Heart left ventricle (tissue), 16 donors: ENCODE measurements at regions of chr10 and their contacts with region 1.

Region 1: DNA sequence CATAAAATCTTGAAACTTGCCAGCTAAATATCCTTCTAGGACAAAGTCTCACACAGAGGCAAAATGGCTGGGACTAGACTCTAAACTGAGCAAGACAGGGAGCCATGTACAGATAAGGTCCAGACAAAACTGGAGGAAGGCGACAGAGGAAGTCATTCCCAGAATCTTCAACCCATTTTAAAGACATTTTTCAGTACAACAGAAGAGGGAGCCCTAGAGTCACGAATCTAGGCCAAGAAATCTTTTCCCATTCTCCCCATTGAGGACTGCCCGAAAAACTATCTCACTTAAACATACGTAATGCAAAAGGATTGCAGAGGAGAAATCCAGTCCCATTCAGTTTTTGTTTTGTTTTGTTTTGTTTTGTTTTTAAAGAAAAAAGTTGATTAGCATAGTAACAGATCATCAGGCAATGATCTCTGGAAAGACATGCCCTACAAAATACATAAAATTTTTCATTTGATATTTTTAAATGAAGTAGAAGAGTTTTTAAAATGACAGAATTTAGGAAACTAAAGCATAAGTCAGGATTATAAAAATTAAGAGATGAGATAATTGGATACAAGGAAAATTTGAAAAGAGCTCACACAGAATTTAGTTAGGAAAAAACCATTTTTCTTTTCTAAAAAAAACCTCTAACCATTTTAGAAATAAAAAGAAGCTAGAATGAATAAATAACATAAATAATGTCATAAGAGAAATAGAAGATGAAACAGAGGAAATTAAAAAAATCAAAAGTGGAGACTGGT is 16.9 kb upstream of the PRF1 start:
- DNase-seq: no peak
- ATAC-seq: no peak
- H3K4me3 ChIP-seq: no peak overlapping the region
- H3K27ac ChIP-seq: no peak overlapping the region
- H3K4me1 ChIP-seq: peaks cover 0 to 11% (median 0%) of the 10 kb centered on the region in 12 donors
- H3K27me3 ChIP-seq: no peaks in the 10 kb centered on the region
- CTCF ChIP-seq: peak in 11 of 12 donors; percentile 7 to 39 (median 24)
- POLR2A ChIP-seq: no peak

Region 2: DNA sequence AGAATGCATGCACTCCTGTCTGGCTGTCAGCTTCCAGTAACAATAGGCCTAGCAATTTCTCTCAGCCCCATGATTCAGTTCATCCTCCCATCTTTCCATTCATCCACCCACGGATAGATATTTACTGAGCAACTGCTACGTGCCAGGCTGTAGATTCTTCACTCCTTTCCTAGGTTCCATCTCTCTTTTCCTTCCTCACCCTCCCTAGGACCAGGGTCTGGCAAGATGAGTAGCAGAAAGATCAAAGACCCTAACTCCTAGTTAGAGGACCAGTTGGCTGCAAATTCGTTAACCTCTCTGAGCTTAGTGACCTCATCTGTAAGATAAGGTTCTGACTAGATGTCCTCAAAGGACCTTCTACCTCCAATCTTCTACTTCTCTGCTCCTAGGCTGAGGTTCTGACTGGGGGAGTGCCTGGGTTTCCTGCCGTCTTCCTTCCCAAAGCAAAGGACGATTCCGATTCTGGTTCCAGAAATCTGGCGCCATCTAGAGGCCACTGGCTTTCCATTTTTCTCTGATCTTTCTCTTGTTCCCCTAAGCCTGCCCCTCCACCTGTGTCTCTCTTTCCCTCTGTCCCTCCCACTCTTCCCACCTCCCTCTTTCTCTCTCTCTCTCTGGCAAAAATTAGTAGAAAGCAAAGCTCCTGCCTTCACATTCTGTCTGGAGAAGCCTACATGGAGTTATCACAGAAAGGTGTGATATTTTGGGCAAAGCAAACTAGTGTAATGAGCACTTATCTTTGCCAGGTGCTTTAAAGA is 139.5 kb after region 1 on chr10:
- intact Hi-C with region 1: loop called in 3 of 10 experiments (anchors 2 kb)
- DNase-seq: peak; percentile 59 to 77 (median 73)
- ATAC-seq: peak; percentile 27 to 80 (median 53)
- H3K4me3 ChIP-seq: no peak overlapping the region
- H3K27ac ChIP-seq: no peak overlapping the region
- H3K4me1 ChIP-seq: peaks cover 0 to 19% (median 2%) of the 10 kb centered on the region in 12 donors
- H3K27me3 ChIP-seq: no peaks in the 10 kb centered on the region
- CTCF ChIP-seq: peak; percentile 65 to 87 (median 76)
- POLR2A ChIP-seq: no peak